ENCODE measurements at regions of chr17 and their contacts with region 1.

Region 1: DNA sequence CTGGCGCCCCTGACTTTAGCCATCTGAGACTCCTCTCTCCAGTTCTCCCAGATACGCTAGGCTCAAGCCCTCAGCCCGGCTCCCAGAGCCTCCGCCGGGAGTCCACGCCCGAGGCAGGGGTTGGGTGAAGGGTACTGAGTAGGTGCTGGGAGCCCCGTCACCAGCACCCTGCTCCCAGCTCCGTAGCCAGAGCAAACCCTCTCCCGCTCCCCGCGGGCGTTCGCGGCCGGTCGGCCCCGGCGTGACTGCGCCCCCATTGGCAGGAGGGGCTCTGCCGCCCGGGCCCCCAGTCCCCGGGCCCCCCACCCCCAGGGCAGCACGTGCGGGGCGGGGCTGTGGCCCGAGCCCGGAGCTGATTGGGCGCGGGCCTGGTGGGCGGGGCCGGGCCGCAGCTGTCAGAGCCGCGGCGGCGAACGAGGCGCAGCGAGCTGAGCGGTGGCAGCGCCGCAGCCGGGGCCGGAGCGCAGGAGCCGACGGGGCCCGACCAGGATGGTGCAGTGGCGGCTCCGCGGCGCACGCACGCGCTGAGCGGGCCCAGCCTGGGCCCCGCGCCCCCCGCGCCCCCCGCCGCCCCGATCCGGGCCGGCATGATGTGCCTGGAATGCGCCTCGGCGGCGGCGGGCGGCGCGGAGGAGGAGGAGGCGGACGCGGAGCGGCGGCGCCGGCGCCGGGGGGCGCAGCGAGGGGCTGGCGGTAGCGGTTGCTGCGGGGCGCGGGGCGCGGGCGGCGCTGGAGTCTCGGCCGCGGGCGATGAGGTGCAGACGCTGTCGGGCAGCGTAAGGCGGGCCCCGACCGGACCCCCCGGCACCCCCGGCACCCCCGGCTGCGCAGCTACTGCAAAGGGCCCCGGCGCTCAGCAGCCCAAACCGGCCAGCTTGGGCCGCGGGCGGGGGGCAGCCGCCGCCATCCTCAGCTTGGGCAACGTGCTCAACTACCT is at the start of gene SPNS2:
- DNase-seq: peak; percentile 84

Region 2: DNA sequence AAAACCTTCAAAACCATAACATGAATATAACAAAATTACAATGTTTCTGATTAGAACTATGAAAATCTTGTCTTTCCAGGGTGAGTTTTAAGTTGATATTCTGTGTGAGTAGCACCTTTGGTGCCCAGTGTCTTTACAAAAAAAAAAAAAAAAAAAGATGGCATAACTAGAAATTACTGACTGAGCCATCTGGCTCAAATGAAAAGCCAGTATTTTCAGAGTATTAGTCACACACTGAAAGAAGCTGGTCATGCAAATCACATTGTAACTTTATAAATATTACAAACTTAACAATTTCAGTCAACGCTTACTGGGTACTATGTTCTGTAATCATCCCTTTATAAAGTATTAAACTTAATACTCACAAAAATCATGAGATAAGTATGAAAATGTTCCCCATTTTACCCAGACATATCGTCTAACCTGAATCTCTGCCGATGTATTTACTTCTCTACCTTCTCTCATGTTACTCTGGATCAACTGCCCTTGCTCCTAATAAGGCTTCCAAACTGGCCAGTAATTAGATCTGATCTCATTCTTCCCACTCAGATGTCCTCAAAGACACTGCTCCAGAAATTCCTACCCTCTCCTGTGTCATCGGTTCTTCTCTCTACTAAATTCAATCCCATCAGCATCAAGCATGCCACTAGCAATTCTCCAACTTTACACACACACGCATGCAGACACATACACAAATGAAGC is 157.7 kb before region 1 on chr17:
- in situ Hi-C with region 1: no loop called
- DNase-seq: no peak

Region 3: DNA sequence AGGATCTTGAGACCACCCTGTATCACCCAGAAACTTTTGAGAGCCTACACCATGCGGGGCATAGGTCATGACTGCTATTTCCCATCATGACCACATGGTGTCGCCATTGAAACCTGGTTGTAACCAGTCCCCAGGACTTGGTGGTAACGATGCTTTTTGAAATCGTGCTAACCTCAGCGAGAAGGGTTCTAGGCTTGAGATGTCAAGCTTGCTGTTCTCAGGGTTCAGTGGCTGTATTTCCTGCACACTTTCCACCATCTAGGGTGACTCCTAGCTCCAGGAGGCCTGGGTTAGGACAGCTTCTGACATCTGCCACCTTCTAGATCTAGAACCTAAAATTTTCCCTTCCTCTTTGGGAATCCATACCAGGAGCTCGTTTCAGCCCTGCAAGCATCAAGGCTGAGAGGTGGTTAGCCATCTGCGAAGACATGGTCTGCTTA is 78.0 kb before region 1 on chr17:
- in situ Hi-C with region 1: loop called (anchors 5 kb)
- DNase-seq: peak; percentile 85

Region 4: GRCh38 chr17:4565209-4566141 is 66.7 kb after region 1 on chr17:
- in situ Hi-C with region 1: no loop called
- DNase-seq: peak; percentile 81

Region 5: DNA sequence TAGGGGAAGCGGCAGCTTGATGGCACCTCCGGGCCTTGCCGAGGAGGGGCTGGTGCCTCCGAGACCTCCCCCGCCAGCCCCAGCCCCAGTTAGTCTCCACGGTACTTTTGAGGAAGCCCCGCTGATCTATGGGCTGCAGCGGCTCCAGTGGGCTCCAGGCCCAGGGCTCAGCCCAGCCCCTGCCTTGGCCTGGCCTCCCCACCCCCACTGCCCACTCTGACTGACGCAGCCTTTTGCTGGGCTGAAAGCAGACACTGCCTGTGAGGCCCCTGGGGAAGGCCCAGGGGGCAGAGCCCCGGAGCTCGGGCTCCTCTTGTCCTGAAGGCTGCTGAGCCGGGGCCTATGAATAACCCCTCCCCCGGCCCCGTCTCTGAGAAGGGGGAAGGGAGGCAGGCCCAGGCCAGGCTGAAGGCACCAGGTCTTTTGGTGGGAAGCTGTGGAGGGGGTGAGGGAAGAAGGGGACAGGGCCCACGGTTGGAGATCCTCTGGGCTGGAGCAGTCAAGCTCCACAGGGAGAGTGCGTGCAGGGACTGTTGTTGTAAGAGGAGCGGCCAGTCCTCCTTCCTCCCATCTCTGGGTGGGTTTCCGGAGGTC is 78.1 kb after region 1 on chr17:
- in situ Hi-C with region 1: no loop called
- DNase-seq: no peak

Measured in ACHN (cell line).